PC-3 (cell line): ENCODE measurements at regions of chr11 and their contacts with region 1.

Region 1: DNA sequence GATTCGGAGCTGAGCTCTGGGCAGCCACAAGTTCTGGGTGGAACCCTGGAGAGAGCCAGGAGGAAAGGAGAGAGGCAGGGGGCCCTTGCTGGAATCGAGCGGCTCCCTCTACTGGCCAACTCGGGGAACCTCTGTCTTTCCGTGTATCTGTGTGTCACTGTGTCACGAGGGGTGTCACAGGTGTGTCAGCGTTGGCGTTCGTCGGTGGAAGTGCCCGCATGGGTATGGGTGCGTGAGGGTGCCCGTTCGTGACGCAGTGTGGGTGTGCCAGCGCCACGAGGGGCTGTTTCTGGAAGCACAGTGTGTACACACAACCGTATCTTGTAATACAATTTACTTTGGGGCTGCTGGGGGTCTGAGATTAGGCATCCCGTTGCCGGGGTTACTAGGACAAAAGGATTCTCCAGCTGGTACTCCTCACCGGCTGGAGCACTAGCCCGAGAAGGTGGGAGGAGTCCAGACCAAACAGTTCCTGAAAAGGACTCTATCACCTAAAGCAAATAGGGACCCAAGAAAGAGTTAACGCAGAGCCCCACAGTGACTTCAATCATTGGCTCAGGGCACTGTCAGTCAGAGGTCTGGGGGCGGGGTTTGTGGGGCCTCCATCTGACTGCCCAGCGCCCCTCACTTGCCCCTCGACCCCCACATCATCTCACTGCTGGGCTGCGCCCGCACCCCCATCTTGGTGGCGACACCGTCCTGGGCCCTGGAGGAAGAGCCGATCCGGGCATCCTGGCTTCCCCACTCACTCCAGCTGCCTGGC is 2.6 kb upstream of the BCL9L start:
- DNase-seq: peak; percentile 98
- ATAC-seq: peak; percentile 52
- H3K4me3 ChIP-seq: peak overlapping the region; percentile 87
- H3K27ac ChIP-seq: peak overlapping the region; percentile 78
- H3K4me1 ChIP-seq: peaks cover 41% of the 10 kb centered on the region
- H3K27me3 ChIP-seq: no peaks in the 10 kb centered on the region
- CTCF ChIP-seq: peak; percentile 97

Region 2: DNA sequence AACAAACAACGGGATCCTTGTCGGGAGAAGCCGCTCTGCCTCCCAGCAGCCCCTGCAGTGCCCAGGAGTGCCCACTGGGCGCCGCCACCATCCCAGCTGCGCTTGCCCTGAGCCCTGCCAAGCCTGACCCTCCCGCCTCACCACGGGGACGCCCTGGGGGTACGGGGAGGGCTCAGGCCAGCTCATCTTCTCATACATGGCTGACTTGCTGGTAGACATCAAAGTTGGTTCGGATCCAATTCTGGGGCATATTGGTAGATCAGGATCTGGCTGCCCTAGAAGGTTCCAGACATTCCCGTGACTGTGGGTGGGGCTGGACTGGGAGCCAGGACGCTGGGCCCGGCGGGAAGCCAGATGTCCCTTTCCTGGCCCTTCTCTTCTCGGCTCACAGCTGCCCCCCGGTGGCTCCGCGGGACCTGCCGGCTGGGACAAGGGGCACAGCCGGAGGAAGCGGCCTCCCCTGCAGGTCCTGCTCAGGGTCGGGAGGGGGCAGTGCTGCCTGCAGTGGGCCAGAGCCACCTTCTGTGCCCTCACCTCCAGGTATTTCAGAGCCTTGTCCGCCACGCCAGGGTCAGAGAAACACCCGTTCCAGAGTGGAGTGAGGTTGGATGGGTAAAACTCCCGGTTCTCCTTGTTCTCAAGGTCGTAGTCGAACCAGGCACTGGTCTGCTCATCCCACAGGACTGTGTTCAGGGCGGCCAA is 238.3 kb before region 1 on chr11:
- CTCF ChIA-PET with region 1: interaction called, 3 read pairs
- POLR2A ChIA-PET with region 1: no interaction called
- intact Hi-C with region 1: loop called (anchors 1 kb)
- DNase-seq: peak; percentile 97
- ATAC-seq: peak; percentile 93
- H3K4me3 ChIP-seq: peak overlapping the region; percentile 66
- H3K27ac ChIP-seq: peak overlapping the region; percentile 37; the same call in 1 of the 2 replicates
- H3K4me1 ChIP-seq: peaks cover 10% of the 10 kb centered on the region; the same call in 1 of the 2 replicates
- H3K27me3 ChIP-seq: no peaks in the 10 kb centered on the region
- CTCF ChIP-seq: peak; percentile 97

Region 3: DNA sequence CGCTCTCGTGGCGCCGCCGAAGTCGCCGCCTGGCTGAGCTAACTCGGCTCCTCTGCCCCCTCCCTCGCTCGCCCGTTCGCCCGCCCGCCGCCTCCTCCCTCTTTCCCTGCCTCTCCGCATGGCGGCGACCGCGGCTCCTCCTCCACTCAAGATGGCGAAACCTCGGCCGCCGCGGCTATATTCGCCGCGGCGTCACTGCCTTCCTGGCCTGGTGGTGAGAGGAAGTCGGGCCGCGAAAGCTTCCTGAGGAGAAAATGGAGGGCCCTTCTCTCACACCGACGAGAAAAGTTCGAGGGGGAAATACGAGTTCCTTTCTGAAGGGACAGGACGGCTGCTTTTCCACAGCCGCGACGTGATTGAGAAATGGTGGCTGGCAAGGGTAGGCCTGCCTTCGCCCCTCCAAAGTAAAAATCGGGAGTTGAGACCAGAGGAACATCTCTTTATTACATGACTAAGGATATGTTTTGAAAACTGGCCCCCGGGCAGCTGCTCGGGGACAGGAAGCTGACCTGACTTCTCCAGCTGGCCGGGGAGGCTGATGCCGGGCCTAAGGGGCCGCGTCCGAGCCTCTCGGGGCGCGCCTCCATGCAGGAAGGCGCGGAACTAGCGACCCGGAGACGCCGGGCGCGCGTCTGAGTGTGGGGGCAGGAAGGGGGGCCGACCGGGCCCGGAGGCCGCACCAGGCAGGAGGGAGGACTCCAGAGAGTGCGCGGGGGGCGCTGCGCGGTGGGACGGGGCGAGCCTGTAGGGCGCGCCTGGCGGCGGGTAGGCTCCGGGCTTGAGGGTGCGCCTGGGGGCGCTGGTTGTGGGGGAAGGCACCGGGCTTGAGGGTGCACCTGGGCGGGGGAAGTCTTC is 137.0 kb before region 1 on chr11 and contains the start of gene DDX6:
- CTCF ChIA-PET with region 1: no interaction called
- POLR2A ChIA-PET with region 1: no interaction called
- intact Hi-C with region 1: loop called (anchors 1 kb)
- DNase-seq: peak; percentile 75
- ATAC-seq: peak; percentile 65
- H3K4me3 ChIP-seq: peak within 1 kb of the TSS; percentile 88
- H3K27ac ChIP-seq: peak within 1 kb of the TSS; percentile 81
- H3K4me1 ChIP-seq: peaks cover 31% of the 10 kb centered on the region
- H3K27me3 ChIP-seq: no peaks in the 10 kb centered on the region
- CTCF ChIP-seq: peak; percentile 26
- total RNA-seq, gene DDX6: 59.4 and 66.3 TPM in 2 replicates

Region 4: GRCh38 chr11:118907051-118908042 is 20.9 kb before region 1 on chr11:
- CTCF ChIA-PET with region 1: interaction called, 23 read pairs
- POLR2A ChIA-PET with region 1: interaction called, 11 read pairs
- intact Hi-C with region 1: loop called (anchors 1 kb)
- DNase-seq: peak; percentile 96
- ATAC-seq: peak; percentile 27
- H3K4me3 ChIP-seq: no peak overlapping the region
- H3K27ac ChIP-seq: no peak overlapping the region
- H3K4me1 ChIP-seq: peaks cover 43% of the 10 kb centered on the region
- H3K27me3 ChIP-seq: no peaks in the 10 kb centered on the region
- CTCF ChIP-seq: peak; percentile 98

Region 5: GRCh38 chr11:118956094-118956846 is 28.0 kb after region 1 on chr11 and contains the start of gene UPK2:
- CTCF ChIA-PET with region 1: no interaction called
- POLR2A ChIA-PET with region 1: no interaction called
- intact Hi-C with region 1: loop called (anchors 1 kb)
- DNase-seq: peak; percentile 97
- ATAC-seq: peak; percentile 99
- H3K4me3 ChIP-seq: no peak within 1 kb of the TSS
- H3K27ac ChIP-seq: no peak within 1 kb of the TSS
- H3K4me1 ChIP-seq: peaks cover 8% of the 10 kb centered on the region; the same call in 1 of the 2 replicates
- H3K27me3 ChIP-seq: no peaks in the 10 kb centered on the region
- CTCF ChIP-seq: peak; percentile 99
- total RNA-seq, gene UPK2: 0.44 TPM in 1 of 2 replicates, not detected in the other

Region 6: GRCh38 chr11:118988280-118988679 is 60.0 kb after region 1 on chr11:
- CTCF ChIA-PET with region 1: interaction called, 12 read pairs
- POLR2A ChIA-PET with region 1: no interaction called
- intact Hi-C with region 1: no loop called
- DNase-seq: no peak
- ATAC-seq: no peak
- H3K4me3 ChIP-seq: no peak overlapping the region
- H3K27ac ChIP-seq: no peak overlapping the region
- H3K4me1 ChIP-seq: no peaks in the 10 kb centered on the region
- H3K27me3 ChIP-seq: no peaks in the 10 kb centered on the region
- CTCF ChIP-seq: no peak